Activated CD4-positive, alpha-beta T cell treated with anti-CD3 and anti-CD28 coated beads for 36 hours (primary cell): ENCODE measurements at regions of chr2 and their contacts with region 1.

Region 1: DNA sequence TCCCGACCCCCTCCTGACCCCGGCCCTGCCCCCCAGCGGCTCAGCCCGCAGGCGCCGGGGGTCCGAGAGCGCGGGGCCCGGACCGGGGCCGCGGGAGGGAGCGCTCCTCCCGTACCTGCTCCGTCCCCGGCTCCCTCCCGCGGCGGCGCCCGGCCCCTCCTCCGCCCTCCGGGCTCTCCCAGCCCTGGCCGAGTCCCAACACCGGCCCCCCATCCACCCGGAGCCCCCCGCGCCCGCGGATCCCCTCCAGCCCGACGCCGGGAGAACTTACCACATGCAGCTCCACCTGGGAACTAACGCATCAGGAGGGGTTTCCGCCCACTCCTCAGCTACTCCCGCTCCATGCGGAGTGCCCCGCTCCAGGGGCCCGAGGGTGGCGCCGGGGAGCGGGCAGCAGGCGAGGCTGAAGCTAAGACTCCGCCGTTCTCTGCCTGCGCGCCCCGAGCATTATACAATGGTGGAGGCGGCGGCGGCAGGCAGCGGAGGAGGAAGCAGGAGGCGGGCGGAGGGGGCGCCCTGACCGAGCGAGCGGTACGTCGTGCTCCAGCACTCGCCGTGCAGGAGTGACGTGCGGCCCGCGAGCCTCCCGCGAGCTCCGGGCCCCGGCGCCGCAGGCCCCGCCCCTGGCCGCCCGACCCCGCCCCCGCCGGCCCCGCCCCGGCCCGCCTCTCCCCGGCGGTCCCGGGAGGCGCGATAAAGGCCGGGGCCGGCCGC is at the start of gene SERTAD2:
- DNase-seq: peak; percentile 90
- ATAC-seq: peak; percentile 80
- H3K4me3 Mint-ChIP-seq: peak within 1 kb of the TSS; percentile 85
- H3K27ac Mint-ChIP-seq: peak within 1 kb of the TSS; percentile 94
- H3K4me1 Mint-ChIP-seq: peaks cover 76% of the 10 kb centered on the region
- H3K27me3 Mint-ChIP-seq: no peaks in the 10 kb centered on the region
- total RNA-seq, gene SERTAD2: 14.5 to 14.9 TPM

Region 2: GRCh38 chr2:64586883-64587481 is 66.5 kb before region 1 on chr2:
- CTCF ChIA-PET with region 1: interaction called, 10 read pairs
- POLR2A ChIA-PET with region 1: no interaction called
- intact Hi-C with region 1: loop called in 1 of 2 experiments (anchors 5 kb)
- DNase-seq: no peak
- ATAC-seq: peak; percentile 44
- H3K4me3 Mint-ChIP-seq: no peak overlapping the region
- H3K27ac Mint-ChIP-seq: no peak overlapping the region
- H3K4me1 Mint-ChIP-seq: peaks cover 20% of the 10 kb centered on the region
- H3K27me3 Mint-ChIP-seq: no peaks in the 10 kb centered on the region

Region 3: GRCh38 chr2:64666810-64667438 is 13.4 kb after region 1 on chr2:
- CTCF ChIA-PET with region 1: interaction called, 18 read pairs
- POLR2A ChIA-PET with region 1: interaction called, 4 read pairs
- intact Hi-C with region 1: no loop called
- DNase-seq: no peak
- ATAC-seq: peak; percentile 69
- H3K4me3 Mint-ChIP-seq: no peak overlapping the region
- H3K27ac Mint-ChIP-seq: peak overlapping the region; percentile 58
- H3K4me1 Mint-ChIP-seq: peaks cover 49% of the 10 kb centered on the region
- H3K27me3 Mint-ChIP-seq: no peaks in the 10 kb centered on the region

Region 4: GRCh38 chr2:64698668-64699444 is 45.4 kb after region 1 on chr2:
- CTCF ChIA-PET with region 1: interaction called, 12 read pairs
- POLR2A ChIA-PET with region 1: no interaction called
- intact Hi-C with region 1: loop called (anchors 1 kb)
- DNase-seq: no peak
- ATAC-seq: peak; percentile 89
- H3K4me3 Mint-ChIP-seq: no peak overlapping the region
- H3K27ac Mint-ChIP-seq: peak overlapping the region; percentile 70
- H3K4me1 Mint-ChIP-seq: peaks cover 54% of the 10 kb centered on the region
- H3K27me3 Mint-ChIP-seq: no peaks in the 10 kb centered on the region

Region 5: GRCh38 chr2:64767670-64768468 is 114.4 kb after region 1 on chr2:
- CTCF ChIA-PET with region 1: interaction called, 9 read pairs
- POLR2A ChIA-PET with region 1: no interaction called
- intact Hi-C with region 1: loop called (anchors 2 to 5 kb)
- DNase-seq: peak; percentile 86
- ATAC-seq: peak; percentile 84
- H3K4me3 Mint-ChIP-seq: peak overlapping the region; percentile 71
- H3K27ac Mint-ChIP-seq: peak overlapping the region; percentile 80
- H3K4me1 Mint-ChIP-seq: peaks cover 25% of the 10 kb centered on the region
- H3K27me3 Mint-ChIP-seq: peaks cover 2% of the 10 kb centered on the region

Region 6: GRCh38 chr2:64865073-64865830 is 211.7 kb after region 1 on chr2:
- CTCF ChIA-PET with region 1: interaction called, 16 read pairs
- POLR2A ChIA-PET with region 1: no interaction called
- intact Hi-C with region 1: no loop called
- DNase-seq: peak; percentile 78
- ATAC-seq: peak; percentile 74
- H3K4me3 Mint-ChIP-seq: peak overlapping the region; percentile 52
- H3K27ac Mint-ChIP-seq: no peak overlapping the region
- H3K4me1 Mint-ChIP-seq: no peaks in the 10 kb centered on the region
- H3K27me3 Mint-ChIP-seq: peaks cover 6% of the 10 kb centered on the region

Region 7: GRCh38 chr2:65227425-65228262 is 574.1 kb after region 1 on chr2 and contains the start of gene ACTR2:
- CTCF ChIA-PET with region 1: no interaction called
- POLR2A ChIA-PET with region 1: no interaction called
- intact Hi-C with region 1: loop called in 1 of 2 experiments (anchors 2 kb)
- DNase-seq: peak; percentile 97
- ATAC-seq: peak; percentile 96
- H3K4me3 Mint-ChIP-seq: peak within 1 kb of the TSS; percentile 95
- H3K27ac Mint-ChIP-seq: peak within 1 kb of the TSS; percentile 98
- H3K4me1 Mint-ChIP-seq: peaks cover 30% of the 10 kb centered on the region
- H3K27me3 Mint-ChIP-seq: no peaks in the 10 kb centered on the region
- total RNA-seq, gene ACTR2: 326 to 388 TPM